ENCODE measurements at regions of chr2 and their contacts with region 1.

Region 1: DNA sequence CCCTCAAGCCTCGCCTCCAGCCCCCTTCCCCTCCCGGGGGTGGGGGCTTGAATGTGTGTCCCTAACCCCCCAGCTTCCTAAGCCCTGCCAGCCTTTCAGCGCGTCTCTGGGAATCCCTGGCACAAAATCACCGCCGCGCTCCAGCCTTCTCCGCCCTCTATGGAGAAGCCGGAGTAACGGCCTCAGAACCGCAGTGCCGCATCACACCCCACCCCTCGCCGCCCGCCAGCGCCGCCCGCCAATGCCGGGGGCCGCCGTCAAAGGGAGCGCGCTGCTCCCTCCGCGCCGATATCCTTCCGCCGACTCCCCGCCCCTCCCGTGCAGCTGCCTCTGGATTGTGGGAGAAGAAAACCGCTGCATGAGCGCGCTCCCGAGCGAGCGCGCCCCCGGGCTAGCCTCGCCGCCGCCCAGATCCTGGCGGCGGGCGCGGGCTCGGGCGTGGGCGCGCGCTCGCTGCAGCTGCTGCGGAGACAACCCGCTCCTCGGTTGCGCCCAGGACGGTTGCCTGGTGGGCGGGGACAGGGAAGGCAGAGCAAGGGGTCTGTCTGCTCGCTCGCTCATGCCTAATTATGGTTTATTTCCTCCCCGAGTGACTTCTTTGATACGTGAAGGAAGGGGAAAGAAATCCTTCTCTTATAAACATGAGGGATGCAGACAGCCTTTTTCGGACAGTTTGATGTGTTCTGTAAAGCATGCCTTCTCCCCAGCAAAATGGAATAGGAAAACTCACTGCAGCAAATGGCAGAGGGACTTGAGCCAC is at the start of gene CCDC88A:
- DNase-seq: peak; percentile 98
- ATAC-seq: peak; percentile 96 to 99 (median 97)
- H3K4me3 ChIP-seq: peak within 1 kb of the TSS; percentile 74 to 93 (median 84)
- H3K27ac ChIP-seq: peak within 1 kb of the TSS; percentile 68 to 93 (median 91)
- H3K4me1 ChIP-seq: peaks cover 0 to 55% (median 23%) of the 10 kb centered on the region in 9 donors
- H3K27me3 ChIP-seq: no peaks in the 10 kb centered on the region
- CTCF ChIP-seq: peak in 7 of 9 donors; percentile 21 to 54 (median 36)
- total RNA-seq, gene CCDC88A: 18.6 to 30.0 (median 22.6) TPM

Region 2: GRCh38 chr2:55268907-55269644 is 150.8 kb before region 1 on chr2 and contains the start of gene MTIF2:
- intact Hi-C with region 1: loop called in 2 of 10 experiments (anchors 2 to 5 kb)
- DNase-seq: peak; percentile 95 to 96
- ATAC-seq: peak; percentile 99 to 100 (median 99)
- H3K4me3 ChIP-seq: peak within 1 kb of the TSS; percentile 53 to 94 (median 70)
- H3K27ac ChIP-seq: peak within 1 kb of the TSS; percentile 75 to 93 (median 88)
- H3K4me1 ChIP-seq: peaks cover 3 to 18% (median 15%) of the 10 kb centered on the region in 9 donors
- H3K27me3 ChIP-seq: no peaks in the 10 kb centered on the region
- CTCF ChIP-seq: peak in 4 of 9 donors; percentile 24 to 36 (median 30)
- total RNA-seq, gene MTIF2: 39.7 to 59.3 (median 50.0) TPM

Region 3: GRCh38 chr2:55282110-55282917 is 137.5 kb before region 1 on chr2:
- intact Hi-C with region 1: loop called in 5 of 10 experiments (anchors 5 to 10 kb)
- DNase-seq: peak; percentile 88 to 94
- ATAC-seq: peak; percentile 97 to 100 (median 98)
- H3K4me3 ChIP-seq: peak overlapping the region; percentile 30 to 96 (median 77)
- H3K27ac ChIP-seq: peak overlapping the region; percentile 87 to 98 (median 94)
- H3K4me1 ChIP-seq: peaks cover 0 to 32% (median 20%) of the 10 kb centered on the region in 9 donors
- H3K27me3 ChIP-seq: peaks cover 0 to 9% (median 0%) of the 10 kb centered on the region in 7 donors
- CTCF ChIP-seq: no peak

Region 4: DNA sequence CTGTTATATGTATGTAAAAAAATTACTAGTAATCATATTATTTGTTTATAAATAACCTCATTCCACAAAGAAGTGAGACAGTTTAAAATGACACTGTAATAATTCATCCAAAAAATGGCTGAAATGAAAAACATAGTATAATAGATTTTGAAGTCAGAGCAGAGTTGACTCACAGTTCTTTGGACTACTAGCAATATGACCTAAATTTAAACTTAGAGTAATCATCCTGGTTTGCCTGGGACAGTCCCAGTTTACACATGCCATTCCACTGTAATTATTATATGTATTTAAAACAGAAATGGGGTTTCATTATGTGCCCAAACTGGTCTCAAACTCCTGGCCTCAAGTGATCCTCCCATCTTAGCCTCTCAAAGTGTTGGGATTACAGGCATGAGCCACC is 48.5 kb before region 1 on chr2:
- intact Hi-C with region 1: loop called in 1 of 10 experiments (anchors 5 kb)
- DNase-seq: no peak
- ATAC-seq: no peak
- H3K4me3 ChIP-seq: no peak overlapping the region
- H3K27ac ChIP-seq: no peak overlapping the region
- H3K4me1 ChIP-seq: no peaks in the 10 kb centered on the region
- H3K27me3 ChIP-seq: no peaks in the 10 kb centered on the region
- CTCF ChIP-seq: no peak

Region 5: DNA sequence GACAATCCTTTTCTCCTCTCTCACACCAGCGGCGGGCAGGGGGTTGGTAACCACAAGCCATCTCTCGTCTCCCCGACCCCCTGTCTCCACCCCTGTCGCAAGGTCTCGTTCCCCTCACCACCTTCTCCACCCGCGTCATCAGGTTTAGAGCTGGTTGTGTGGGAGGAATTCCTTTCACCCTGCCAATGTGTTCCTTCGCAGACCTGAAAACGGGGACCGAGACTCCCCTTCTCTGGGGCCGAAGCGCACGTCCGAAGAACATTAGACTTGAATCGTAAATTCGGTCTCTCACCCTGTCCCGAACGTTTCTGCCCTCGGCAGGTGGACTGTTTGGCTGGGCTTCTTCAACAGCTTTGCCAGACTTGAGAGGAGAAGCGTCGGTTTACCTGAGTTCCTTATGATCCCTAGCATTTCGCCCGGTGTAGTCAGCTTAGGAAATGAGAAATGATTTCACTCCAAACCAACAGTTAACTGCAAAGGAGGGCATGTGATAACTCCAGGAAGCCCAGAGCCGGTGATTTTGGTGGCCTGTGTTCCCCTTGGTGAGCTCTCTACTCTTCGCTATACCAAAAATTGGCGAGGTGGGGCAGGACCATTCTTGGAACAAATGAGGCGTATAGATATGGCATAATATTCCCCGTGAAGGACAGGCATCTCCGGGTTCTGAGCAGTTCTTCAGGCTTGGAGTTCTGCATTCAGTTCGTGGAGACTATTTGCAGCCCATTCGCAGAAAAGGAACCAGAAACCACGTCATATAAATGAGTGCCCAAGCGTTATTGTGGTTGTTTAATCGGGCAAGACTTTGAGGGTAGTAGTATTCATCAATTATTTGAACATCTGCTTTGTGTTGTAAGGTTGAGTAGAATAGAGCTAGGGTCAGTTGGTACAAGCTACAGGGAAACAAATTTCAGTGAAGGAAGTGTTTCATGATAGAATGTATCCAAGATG is 100.4 kb after region 1 on chr2:
- intact Hi-C with region 1: loop called in 2 of 10 experiments (anchors 5 to 10 kb)
- DNase-seq: peak in 1 of 2 donors; percentile 37
- ATAC-seq: peak in 7 of 8 donors; percentile 2 to 45 (median 31)
- H3K4me3 ChIP-seq: peak overlapping the region; percentile 42 to 95 (median 82)
- H3K27ac ChIP-seq: peak overlapping the region; percentile 17 to 94 (median 84)
- H3K4me1 ChIP-seq: peaks cover 0 to 22% (median 10%) of the 10 kb centered on the region in 9 donors
- H3K27me3 ChIP-seq: no peaks in the 10 kb centered on the region
- CTCF ChIP-seq: no peak

Region 6: DNA sequence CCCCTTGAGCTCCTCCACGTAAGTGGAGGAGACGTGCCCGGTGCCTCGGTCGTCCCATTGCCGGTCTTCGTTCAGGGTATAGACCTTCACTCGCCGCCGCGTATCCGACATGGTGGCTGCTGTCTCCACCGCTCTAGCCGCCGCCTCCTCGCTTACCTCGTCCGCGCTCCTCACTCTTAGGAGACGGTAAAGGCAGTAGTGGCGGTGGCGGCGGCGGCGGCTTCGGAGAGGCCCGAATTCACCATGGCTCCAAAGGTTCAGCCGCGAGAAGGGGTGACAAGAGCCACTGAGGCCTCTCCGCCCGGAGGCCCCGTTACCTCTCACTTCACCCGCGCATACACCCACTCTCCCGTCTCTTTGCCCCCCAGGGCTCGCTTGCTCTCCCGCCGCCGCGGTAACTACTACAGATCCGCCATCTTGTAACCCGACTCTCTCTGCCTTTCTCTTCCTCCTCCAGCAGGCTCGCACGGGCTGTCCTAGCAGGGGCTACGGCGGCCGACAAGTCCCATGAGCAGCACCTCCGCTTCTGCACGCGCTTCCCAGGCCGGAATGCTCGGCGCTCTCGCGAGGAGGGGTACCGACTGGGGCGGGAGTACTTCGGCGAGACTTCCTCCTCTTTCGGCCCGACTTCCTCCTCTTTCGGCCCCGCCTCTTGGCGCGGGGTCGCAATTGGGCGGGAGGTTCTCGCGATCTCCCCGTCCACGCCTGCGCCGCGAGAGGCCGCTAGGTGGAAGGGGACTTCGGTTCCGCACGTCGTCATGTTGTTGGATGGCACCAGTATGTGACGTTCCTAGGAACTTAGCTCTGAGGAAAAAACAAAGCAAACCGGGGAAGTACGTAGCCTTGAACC is 197.5 kb after region 1 on chr2 and contains the start of gene PPP4R3B:
- intact Hi-C with region 1: loop called in 4 of 10 experiments (anchors 1 to 10 kb)
- DNase-seq: peak; percentile 99 to 100
- ATAC-seq: peak; percentile 94 to 98 (median 97)
- H3K4me3 ChIP-seq: peak within 1 kb of the TSS; percentile 80 to 99 (median 90)
- H3K27ac ChIP-seq: peak within 1 kb of the TSS; percentile 89 to 100 (median 96)
- H3K4me1 ChIP-seq: peaks cover 13 to 61% (median 42%) of the 10 kb centered on the region in 9 donors
- H3K27me3 ChIP-seq: no peaks in the 10 kb centered on the region
- CTCF ChIP-seq: peak; percentile 10 to 66 (median 55)
- total RNA-seq, gene PPP4R3B: 21.3 to 29.0 (median 25.2) TPM

Measured in heart right ventricle (tissue), 16 donors.